ENCODE measurements at regions of chr1 and their contacts with region 1.

Region 1: DNA sequence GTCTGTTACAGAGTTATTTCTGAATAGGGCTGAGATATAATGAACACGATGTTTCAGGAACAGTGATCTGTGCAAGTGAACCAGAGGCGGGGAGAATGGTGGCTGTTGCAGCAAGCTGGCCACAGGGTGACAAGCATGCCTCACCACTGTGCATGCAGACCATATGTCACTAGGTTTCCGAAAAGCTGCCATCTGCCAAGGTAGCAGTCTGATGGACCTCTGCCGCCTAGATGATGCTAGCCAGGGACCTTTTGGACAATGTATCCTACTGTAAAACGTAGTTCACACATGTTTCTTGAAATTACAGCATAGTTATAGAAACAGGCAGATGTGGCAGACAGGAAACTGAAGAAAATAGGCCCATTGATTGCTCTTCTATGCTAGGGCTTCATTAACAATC is 204.2 kb upstream of the RRP15 start:
- DNase-seq: no peak
- H3K4me3 ChIP-seq: no peak overlapping the region
- H3K27ac ChIP-seq: no peak overlapping the region
- H3K4me1 ChIP-seq: no peaks in the 10 kb centered on the region
- H3K27me3 ChIP-seq: no peaks in the 10 kb centered on the region
- CTCF ChIP-seq: no peak

Region 2: DNA sequence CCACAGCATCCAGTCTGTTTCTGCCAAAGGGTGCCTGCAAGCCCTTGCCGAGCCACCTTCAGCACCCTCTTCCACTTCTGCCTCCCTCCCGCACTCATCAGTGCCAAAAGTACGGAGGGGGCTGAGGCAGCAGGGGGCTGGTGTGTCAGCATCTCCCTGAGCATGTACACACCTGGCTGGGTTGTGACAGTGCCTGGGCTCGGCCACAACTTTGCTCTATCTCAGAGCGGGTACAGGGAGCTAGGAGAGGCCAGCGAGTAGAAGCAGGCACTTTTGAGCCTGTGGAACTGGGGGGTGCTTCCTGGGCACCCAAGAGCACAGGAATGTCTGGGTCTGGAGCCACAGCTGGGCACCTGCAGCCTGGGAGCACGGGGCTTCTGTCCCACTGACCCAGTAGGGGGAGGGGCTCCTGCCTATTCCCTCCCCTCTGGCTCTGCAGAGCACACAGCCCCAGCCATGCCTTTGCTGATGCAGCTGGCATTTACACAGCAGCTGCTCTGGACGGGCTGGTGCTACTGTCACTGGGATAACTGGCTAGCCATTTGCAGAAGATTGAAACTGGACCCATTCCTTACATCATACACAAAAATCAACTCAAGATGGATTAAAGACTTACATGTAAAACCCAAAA is 115.6 kb before region 1 on chr1:
- CTCF ChIA-PET with region 1: no interaction called
- dilution Hi-C with region 1: no loop called
- in situ Hi-C with region 1: no loop called
- intact Hi-C with region 1: no loop called
- DNase-seq: no peak
- H3K4me3 ChIP-seq: no peak overlapping the region
- H3K27ac ChIP-seq: no peak overlapping the region
- H3K4me1 ChIP-seq: no peaks in the 10 kb centered on the region
- H3K27me3 ChIP-seq: peaks cover 4% of the 10 kb centered on the region
- CTCF ChIP-seq: no peak

Region 3: GRCh38 chr1:217982331-217983050 is 98.4 kb before region 1 on chr1:
- CTCF ChIA-PET with region 1: no interaction called
- dilution Hi-C with region 1: loop called (anchors 5 kb)
- in situ Hi-C with region 1: no loop called
- intact Hi-C with region 1: no loop called
- DNase-seq: no peak
- H3K4me3 ChIP-seq: no peak overlapping the region
- H3K27ac ChIP-seq: no peak overlapping the region
- H3K4me1 ChIP-seq: no peaks in the 10 kb centered on the region
- H3K27me3 ChIP-seq: peaks cover 2% of the 10 kb centered on the region
- CTCF ChIP-seq: no peak

Region 4: GRCh38 chr1:218123968-218124367 is 43.1 kb after region 1 on chr1:
- CTCF ChIA-PET with region 1: no interaction called
- dilution Hi-C with region 1: no loop called
- in situ Hi-C with region 1: no loop called
- intact Hi-C with region 1: no loop called
- DNase-seq: no peak
- H3K4me3 ChIP-seq: no peak overlapping the region
- H3K27ac ChIP-seq: no peak overlapping the region
- H3K4me1 ChIP-seq: no peaks in the 10 kb centered on the region
- H3K27me3 ChIP-seq: no peaks in the 10 kb centered on the region
- CTCF ChIP-seq: no peak